Posterior vena cava (tissue), 2 donors: ENCODE measurements at regions of chr20 and their contacts with region 1.

Region 1: GRCh38 chr20:53281557-53282117 is 309.5 kb downstream of the TSHZ2 start:
- DNase-seq: no peak

Region 2: DNA sequence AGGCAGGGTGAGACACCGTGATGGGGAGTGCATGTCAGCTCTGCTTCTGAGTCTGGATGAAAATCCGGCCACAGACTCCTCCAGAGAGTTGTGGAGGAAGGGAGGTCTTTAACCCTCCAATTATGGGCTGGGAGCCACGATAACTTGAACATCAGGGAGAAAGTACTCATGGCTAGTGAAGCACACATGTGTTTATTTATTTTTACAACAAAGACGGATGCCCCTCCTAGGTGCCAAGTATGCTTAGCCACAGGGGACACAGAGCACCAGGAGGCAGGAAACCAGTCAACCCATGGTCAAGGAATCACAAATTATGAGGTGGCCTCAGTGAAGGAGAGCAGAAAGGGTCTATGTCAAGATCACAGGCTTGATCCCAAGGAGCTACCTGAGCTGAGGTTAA is 257.9 kb after region 1 on chr20:
- intact Hi-C with region 1: loop called in 1 of 2 experiments (anchors 2 kb)
- DNase-seq: no peak